Endothelial cell of umbilical vein (primary cell): ENCODE measurements at regions of chr6 and their contacts with region 1.

Region 1: DNA sequence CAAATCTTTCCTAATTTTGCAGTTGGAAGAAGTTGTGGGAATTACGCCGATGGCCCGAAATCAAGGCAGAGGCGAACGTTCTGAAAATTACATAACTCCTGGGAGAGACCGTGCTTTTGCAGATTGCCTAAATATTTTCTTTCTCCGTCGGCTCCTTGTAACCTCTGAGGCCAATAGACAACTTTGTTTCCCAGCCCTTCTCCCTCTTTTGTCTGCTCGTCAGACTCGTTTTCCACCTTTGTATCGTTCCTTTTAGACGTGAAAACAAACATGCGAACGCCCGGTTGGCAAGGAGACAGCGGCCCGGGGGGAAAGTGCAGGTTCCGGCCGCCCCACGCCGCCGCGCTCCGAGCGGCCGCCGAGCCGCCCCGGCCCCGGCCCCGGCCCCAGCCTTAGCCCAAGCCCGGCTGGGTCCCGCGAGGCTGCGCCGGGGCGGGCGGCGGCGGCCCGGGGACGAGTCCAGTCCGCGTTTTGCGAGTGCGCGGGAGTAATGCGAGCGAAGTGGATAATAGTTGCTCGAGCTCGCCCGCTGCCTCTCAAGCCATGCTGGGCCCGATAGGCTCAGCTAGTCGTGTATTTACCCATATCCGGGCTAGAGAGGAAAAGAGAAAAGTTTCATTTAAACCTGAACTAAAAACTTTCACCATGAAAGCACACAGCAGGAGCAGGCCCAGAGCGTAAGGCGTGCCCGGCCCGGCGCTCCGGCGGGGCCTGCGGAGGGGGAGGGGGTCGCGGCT is at the start of gene ARID1B:
- DNase-seq: peak; percentile 81
- H3K4me3 ChIP-seq: peak within 1 kb of the TSS; percentile 82 to 97 (median 90)
- H3K27ac ChIP-seq: peak within 1 kb of the TSS; percentile 85
- H3K4me1 ChIP-seq: peaks cover 33% of the 10 kb centered on the region
- H3K27me3 ChIP-seq: no peaks in the 10 kb centered on the region
- CTCF ChIP-seq: no peak
- POLR2A ChIP-seq: peak; percentile 46
- total RNA-seq, gene ARID1B: 81.3 and 89.5 TPM in 2 replicates

Region 2: GRCh38 chr6:155327326-155328073 is 1449.5 kb before region 1 on chr6:
- CTCF ChIA-PET with region 1: no interaction called
- POLR2A ChIA-PET with region 1: no interaction called
- dilution Hi-C with region 1: no loop called
- intact Hi-C with region 1: loop called (anchors 5 kb)
- DNase-seq: peak; percentile 84
- H3K4me3 ChIP-seq: no peak overlapping the region
- H3K27ac ChIP-seq: peak overlapping the region; percentile 7
- H3K4me1 ChIP-seq: peaks cover 9% of the 10 kb centered on the region
- H3K27me3 ChIP-seq: no peaks in the 10 kb centered on the region
- CTCF ChIP-seq: peak; percentile 50 to 58
- POLR2A ChIP-seq: no peak

Region 3: GRCh38 chr6:156060013-156060412 is 717.0 kb before region 1 on chr6:
- CTCF ChIA-PET with region 1: no interaction called
- POLR2A ChIA-PET with region 1: no interaction called
- dilution Hi-C with region 1: no loop called
- intact Hi-C with region 1: no loop called
- DNase-seq: no peak
- H3K4me3 ChIP-seq: no peak overlapping the region
- H3K27ac ChIP-seq: no peak overlapping the region
- H3K4me1 ChIP-seq: no peaks in the 10 kb centered on the region
- H3K27me3 ChIP-seq: no peaks in the 10 kb centered on the region
- CTCF ChIP-seq: no peak
- POLR2A ChIP-seq: no peak

Region 4: GRCh38 chr6:156348424-156348823 is 428.6 kb before region 1 on chr6:
- CTCF ChIA-PET with region 1: no interaction called
- POLR2A ChIA-PET with region 1: no interaction called
- dilution Hi-C with region 1: no loop called
- intact Hi-C with region 1: loop called (anchors 5 kb)
- DNase-seq: peak; percentile 86
- H3K4me3 ChIP-seq: peak overlapping the region in 1 of 3 experiments; percentile 20
- H3K27ac ChIP-seq: peak overlapping the region; percentile 46
- H3K4me1 ChIP-seq: peaks cover 23% of the 10 kb centered on the region
- H3K27me3 ChIP-seq: no peaks in the 10 kb centered on the region
- CTCF ChIP-seq: no peak
- POLR2A ChIP-seq: no peak

Region 5: DNA sequence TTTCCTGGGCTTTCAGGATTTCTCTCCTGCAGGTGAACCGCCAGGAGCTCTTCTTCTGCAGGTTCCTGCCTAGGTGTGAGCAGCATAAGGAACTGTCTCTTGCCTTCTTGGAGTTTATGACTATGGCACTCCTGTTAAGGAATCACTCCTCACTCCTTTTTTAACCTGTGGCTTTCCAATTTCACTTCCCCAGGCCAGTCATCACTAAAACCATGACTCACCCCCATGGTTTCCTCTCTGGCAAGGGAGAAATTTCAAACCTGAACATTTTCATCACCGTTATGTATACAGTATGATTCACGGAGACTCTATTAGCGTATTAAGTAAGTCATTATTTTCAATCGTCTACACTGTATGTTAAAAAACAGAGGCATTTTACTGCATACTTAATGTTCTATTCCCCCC is 78.0 kb before region 1 on chr6:
- CTCF ChIA-PET with region 1: no interaction called
- POLR2A ChIA-PET with region 1: no interaction called
- dilution Hi-C with region 1: no loop called
- intact Hi-C with region 1: loop called (anchors 2 kb)
- DNase-seq: peak; percentile 74
- H3K4me3 ChIP-seq: no peak overlapping the region
- H3K27ac ChIP-seq: peak overlapping the region; percentile 12
- H3K4me1 ChIP-seq: peaks cover 12% of the 10 kb centered on the region
- H3K27me3 ChIP-seq: peaks cover 0 to under 1% of the 10 kb centered on the region in 2 experiments
- CTCF ChIP-seq: no peak
- POLR2A ChIP-seq: no peak

Region 6: DNA sequence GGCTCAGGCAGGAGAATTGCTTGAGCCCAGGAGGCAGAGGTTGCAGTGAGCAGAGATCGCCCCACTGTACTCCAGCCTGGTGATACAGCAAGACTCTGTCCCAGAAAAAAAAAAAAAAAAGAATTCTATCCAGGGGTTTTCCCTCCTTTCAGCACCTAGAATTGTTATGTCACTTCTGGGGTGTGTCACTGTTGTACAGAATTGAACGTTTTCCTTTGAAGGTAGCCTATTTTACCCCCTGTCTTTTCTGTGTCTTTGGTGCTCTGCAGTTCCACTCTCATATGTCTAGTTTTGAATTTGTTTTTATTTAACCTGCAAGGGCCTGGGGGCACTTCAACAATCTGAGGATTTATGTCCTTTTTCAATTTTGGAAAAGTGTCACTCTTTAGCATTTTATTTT is 19.2 kb before region 1 on chr6:
- CTCF ChIA-PET with region 1: no interaction called
- POLR2A ChIA-PET with region 1: no interaction called
- dilution Hi-C with region 1: no loop called
- intact Hi-C with region 1: no loop called
- DNase-seq: no peak
- H3K4me3 ChIP-seq: no peak overlapping the region
- H3K27ac ChIP-seq: no peak overlapping the region
- H3K4me1 ChIP-seq: no peaks in the 10 kb centered on the region
- H3K27me3 ChIP-seq: peaks cover 0 to 2% of the 10 kb centered on the region in 2 experiments
- CTCF ChIP-seq: no peak
- POLR2A ChIP-seq: no peak

Region 7: DNA sequence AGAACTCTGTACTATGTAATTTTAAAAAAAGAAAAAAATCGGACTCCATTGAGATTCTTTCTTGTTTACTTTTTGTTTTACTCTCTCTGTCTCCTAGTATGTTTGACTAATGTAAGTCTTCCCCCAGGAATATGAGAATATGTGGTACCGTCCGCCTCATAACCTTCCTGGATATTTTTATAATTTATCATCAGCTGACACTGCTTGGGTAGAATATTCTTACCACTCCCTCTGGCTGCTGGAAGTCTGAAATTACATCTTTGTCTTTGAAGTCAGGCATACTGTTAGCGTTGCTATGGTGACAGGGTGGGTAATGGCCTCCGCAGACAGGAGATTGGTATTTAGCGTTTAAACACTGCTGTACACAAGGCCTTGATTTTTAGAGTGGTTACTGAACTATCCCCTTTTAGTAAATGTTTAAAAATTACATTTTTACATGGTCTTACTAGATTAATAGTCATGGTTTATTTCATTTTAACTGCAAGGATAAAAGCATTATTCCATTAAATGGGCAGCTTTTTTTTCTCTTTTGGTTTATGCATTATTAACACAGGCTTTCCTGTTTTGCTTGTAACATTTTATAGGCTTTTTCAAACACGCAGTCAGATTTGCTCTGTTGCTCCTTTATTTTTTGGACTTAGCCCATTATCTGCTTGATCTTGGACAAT is 176.6 kb after region 1 on chr6:
- CTCF ChIA-PET with region 1: interaction called, 3 read pairs
- POLR2A ChIA-PET with region 1: no interaction called
- dilution Hi-C with region 1: no loop called
- intact Hi-C with region 1: loop called (anchors 5 kb)
- DNase-seq: peak; percentile 93
- H3K4me3 ChIP-seq: no peak overlapping the region
- H3K27ac ChIP-seq: no peak overlapping the region
- H3K4me1 ChIP-seq: peaks cover 38% of the 10 kb centered on the region
- H3K27me3 ChIP-seq: no peaks in the 10 kb centered on the region
- CTCF ChIP-seq: peak in 1 of 2 donors; percentile 6
- POLR2A ChIP-seq: no peak

Region 8: DNA sequence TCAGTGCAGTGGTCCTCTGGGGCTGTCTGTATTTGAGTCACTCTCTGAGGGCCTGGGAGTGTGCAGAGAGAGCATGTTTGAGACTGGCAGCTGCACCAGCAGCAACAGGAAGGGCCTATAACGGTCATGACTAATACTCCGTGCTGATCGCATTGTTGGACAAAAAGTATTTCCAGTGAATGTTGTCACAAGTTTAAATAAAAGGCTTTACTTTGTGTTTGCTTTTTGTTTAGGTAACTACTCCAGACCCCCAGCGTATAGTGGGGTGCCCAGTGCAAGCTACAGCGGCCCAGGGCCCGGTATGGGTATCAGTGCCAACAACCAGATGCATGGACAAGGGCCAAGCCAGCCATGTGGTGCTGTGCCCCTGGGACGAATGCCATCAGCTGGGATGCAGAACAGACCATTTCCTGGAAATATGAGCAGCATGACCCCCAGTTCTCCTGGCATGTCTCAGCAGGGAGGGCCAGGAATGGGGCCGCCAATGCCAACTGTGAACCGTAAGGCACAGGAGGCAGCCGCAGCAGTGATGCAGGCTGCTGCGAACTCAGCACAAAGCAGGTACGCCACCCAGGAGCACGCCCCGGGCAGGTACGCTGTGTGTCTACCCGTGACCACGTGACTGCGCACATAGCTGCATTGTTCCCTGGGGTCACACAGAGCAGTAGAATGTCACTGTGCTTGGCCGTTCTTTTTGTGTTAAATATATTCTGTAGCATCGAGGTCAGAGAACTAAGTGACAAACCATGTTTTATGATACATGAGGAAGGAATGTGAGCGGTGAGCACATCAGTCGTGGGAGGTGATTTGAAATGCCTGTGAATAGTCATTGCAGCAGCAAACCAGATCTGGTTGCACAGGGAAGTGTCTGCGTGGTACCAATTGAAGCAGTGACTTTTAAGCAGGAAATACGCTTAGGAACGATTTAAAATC is 371.6 kb after region 1 on chr6:
- CTCF ChIA-PET with region 1: no interaction called
- POLR2A ChIA-PET with region 1: no interaction called
- dilution Hi-C with region 1: no loop called
- intact Hi-C with region 1: loop called (anchors 2 kb)
- DNase-seq: peak; percentile 97
- H3K4me3 ChIP-seq: peak overlapping the region in 1 of 3 experiments; percentile 1
- H3K27ac ChIP-seq: peak overlapping the region; percentile 97
- H3K4me1 ChIP-seq: peaks cover 60% of the 10 kb centered on the region
- H3K27me3 ChIP-seq: no peaks in the 10 kb centered on the region
- CTCF ChIP-seq: no peak
- POLR2A ChIP-seq: no peak